Caco-2 (cell line): ENCODE measurements at regions of chr2 and their contacts with region 1.

Region 1: GRCh38 chr2:134657637-134658250 is 61.1 kb downstream of the TMEM163 start:
- DNase-seq: peak in 1 of 2 experiments; percentile 26
- H3K4me3 ChIP-seq: no peak overlapping the region
- H3K4me3 Mint-ChIP-seq: no peak overlapping the region
- H3K27ac Mint-ChIP-seq: no peak overlapping the region
- H3K4me1 ChIP-seq: 0 out of 2 replicates have a peak, but pooled peaks cover 4% of the 10 kb centered on the region
- H3K4me1 Mint-ChIP-seq: no peaks in the 10 kb centered on the region
- H3K27me3 ChIP-seq: no peaks in the 10 kb centered on the region
- H3K27me3 Mint-ChIP-seq: no peaks in the 10 kb centered on the region
- CTCF ChIP-seq: peak; percentile 28 to 37

Region 2: DNA sequence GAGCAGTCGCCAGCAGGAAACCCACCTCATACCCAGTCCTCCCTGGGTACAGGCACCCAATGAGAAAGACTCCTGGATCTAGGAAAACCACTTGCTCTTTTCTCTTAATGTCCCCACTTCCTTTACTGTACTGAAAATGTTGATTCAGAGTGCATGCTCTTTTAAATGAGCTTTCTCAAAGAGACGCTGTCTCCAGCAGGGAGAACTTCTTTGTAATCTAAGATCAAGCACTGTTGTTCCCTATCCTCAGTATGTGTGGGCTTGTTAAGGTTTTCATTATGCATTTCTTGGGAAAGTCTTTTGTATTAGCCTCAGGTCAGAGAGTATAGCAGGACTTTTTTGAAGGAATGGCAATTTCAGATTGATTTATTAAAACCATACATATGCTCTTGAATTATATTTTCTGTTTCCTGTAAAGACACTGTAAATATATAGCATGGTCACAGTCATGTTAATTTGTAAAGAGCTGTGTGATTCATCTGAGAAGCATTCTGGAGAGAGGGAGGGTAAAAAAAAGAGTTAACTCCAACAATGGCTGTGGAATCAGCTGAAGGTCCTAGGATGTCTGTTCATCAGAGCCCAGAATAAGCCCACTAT is 225.8 kb before region 1 on chr2:
- CTCF ChIA-PET with region 1: no interaction called
- POLR2A ChIA-PET with region 1: no interaction called
- intact Hi-C with region 1: no loop called
- DNase-seq: no peak
- H3K4me3 ChIP-seq: no peak overlapping the region
- H3K4me3 Mint-ChIP-seq: peak overlapping the region; percentile 42
- H3K27ac Mint-ChIP-seq: peak overlapping the region; percentile 78
- H3K4me1 ChIP-seq: peaks cover 31% of the 10 kb centered on the region
- H3K4me1 Mint-ChIP-seq: peaks cover 48% of the 10 kb centered on the region
- H3K27me3 ChIP-seq: no peaks in the 10 kb centered on the region
- H3K27me3 Mint-ChIP-seq: no peaks in the 10 kb centered on the region
- CTCF ChIP-seq: no peak

Region 3: DNA sequence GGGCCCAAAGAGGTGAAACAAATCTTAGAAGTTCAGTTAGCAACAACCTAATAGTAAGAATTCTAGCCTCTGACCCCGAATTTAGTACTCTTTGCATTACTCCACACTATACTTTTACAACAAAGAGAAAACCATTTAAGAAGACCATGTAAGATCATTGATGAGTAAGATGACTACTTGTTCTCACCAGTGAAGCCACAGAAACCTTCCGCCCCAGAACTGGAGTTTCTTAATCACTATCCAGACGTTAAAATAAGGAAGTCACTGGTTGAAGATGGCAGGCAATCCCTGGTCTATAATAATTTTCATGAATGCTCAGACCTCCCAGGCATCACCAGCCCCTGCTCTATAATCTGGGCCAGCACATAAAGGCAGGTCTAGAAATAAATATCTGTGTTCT is 33.9 kb before region 1 on chr2:
- CTCF ChIA-PET with region 1: no interaction called
- POLR2A ChIA-PET with region 1: no interaction called
- intact Hi-C with region 1: no loop called
- DNase-seq: no peak
- H3K4me3 ChIP-seq: no peak overlapping the region
- H3K4me3 Mint-ChIP-seq: no peak overlapping the region
- H3K27ac Mint-ChIP-seq: no peak overlapping the region
- H3K4me1 ChIP-seq: no peaks in the 10 kb centered on the region
- H3K4me1 Mint-ChIP-seq: no peaks in the 10 kb centered on the region
- H3K27me3 ChIP-seq: no peaks in the 10 kb centered on the region
- H3K27me3 Mint-ChIP-seq: no peaks in the 10 kb centered on the region
- CTCF ChIP-seq: no peak

Region 4: DNA sequence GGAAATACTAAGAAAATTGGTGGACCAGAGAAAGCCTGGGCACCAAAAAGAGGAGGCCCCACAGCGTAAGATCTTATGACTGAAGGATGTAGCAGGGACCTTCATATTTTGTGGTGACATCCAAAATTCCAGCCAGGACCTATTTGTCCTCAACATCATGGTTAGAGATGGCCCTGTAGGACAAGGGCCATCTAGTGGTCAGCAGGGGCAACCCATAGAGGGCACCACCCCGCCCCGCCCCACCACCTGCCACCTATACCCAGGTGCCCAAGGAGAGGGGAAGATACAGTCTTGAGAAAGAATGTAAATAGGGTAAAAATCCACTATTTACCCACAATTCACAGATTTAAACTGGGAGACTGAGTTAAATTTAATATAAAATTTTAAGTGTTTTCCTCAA is 120.6 kb after region 1 on chr2:
- CTCF ChIA-PET with region 1: no interaction called
- POLR2A ChIA-PET with region 1: no interaction called
- intact Hi-C with region 1: loop called (anchors 5 kb)
- DNase-seq: peak in 1 of 2 experiments; percentile 10
- H3K4me3 ChIP-seq: no peak overlapping the region
- H3K4me3 Mint-ChIP-seq: no peak overlapping the region
- H3K27ac Mint-ChIP-seq: no peak overlapping the region
- H3K4me1 ChIP-seq: 0 out of 2 replicates have a peak, but pooled peaks cover 3% of the 10 kb centered on the region
- H3K4me1 Mint-ChIP-seq: no peaks in the 10 kb centered on the region
- H3K27me3 ChIP-seq: no peaks in the 10 kb centered on the region
- H3K27me3 Mint-ChIP-seq: no peaks in the 10 kb centered on the region
- CTCF ChIP-seq: peak; percentile 49 to 50